ENCODE measurements at regions of chr12 and their contacts with region 1.

Region 1: GRCh38 chr12:55715833-55716581 is at the start of gene BLOC1S1:
- DNase-seq: peak; percentile 84
- H3K4me3 ChIP-seq: peak within 1 kb of the TSS; percentile 66 to 94 (median 82)
- H3K27ac ChIP-seq: peak within 1 kb of the TSS; percentile 83
- H3K4me1 ChIP-seq: peaks cover 24% of the 10 kb centered on the region
- H3K27me3 ChIP-seq: peaks cover 11 to 17% of the 10 kb centered on the region in 2 experiments
- CTCF ChIP-seq: no peak
- POLR2A ChIP-seq: no peak
- total RNA-seq, gene BLOC1S1: 84.1 and 85.6 TPM in 2 replicates

Region 2: DNA sequence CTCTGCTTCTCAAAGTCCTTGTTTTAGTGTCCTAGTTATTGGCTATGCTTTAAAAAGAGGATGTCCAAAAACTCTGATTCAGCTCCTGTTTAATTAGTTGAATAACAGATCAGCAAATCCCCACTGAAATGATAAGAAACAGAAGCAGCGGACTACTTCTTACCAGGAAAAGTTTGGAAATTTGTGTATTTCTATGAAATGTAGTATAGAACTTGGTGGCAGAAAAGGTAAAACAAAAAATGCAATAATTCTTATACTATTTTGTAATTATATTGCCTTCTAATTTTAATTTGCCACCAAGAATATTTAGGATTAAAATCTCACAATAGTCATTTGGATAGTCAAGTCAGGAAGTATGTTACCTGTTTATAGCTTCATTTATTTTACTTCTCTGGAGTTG is 143.8 kb before region 1 on chr12 and contains the start of gene OR2AP1:
- CTCF ChIA-PET with region 1: no interaction called
- POLR2A ChIA-PET with region 1: no interaction called
- dilution Hi-C with region 1: no loop called
- intact Hi-C with region 1: no loop called
- DNase-seq: no peak
- H3K4me3 ChIP-seq: no peak within 1 kb of the TSS
- H3K27ac ChIP-seq: no peak within 1 kb of the TSS
- H3K4me1 ChIP-seq: no peaks in the 10 kb centered on the region
- H3K27me3 ChIP-seq: no peaks in the 10 kb centered on the region
- CTCF ChIP-seq: no peak
- POLR2A ChIP-seq: no peak
- total RNA-seq, gene OR2AP1: not detected in 2 replicates

Region 3: DNA sequence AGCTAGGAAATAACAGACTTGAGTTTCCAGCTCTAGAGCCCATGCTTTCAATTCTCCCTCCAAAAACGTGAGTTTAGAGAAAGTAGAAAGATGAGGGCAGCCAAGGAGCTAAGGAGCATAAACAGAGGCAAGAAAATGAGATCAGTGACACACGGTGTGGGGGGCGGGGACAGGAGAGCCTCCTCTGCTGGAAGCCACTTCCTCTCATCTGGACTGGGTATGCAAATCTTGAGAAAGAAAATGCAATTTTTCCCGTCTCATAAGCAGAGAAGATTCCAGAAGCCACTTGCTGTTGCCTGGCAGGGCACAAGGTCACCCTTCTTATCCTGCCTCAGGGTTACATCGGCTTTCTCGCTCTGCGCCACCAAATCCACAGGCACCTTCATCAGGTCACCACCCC is 73.3 kb before region 1 on chr12:
- CTCF ChIA-PET with region 1: interaction called, 22 read pairs
- POLR2A ChIA-PET with region 1: no interaction called
- dilution Hi-C with region 1: no loop called
- intact Hi-C with region 1: loop called (anchors 1 kb)
- DNase-seq: no peak
- H3K4me3 ChIP-seq: no peak overlapping the region
- H3K27ac ChIP-seq: no peak overlapping the region
- H3K4me1 ChIP-seq: no peaks in the 10 kb centered on the region
- H3K27me3 ChIP-seq: peaks cover 3 to 6% of the 10 kb centered on the region in 2 experiments
- CTCF ChIP-seq: no peak
- POLR2A ChIP-seq: no peak

Region 4: DNA sequence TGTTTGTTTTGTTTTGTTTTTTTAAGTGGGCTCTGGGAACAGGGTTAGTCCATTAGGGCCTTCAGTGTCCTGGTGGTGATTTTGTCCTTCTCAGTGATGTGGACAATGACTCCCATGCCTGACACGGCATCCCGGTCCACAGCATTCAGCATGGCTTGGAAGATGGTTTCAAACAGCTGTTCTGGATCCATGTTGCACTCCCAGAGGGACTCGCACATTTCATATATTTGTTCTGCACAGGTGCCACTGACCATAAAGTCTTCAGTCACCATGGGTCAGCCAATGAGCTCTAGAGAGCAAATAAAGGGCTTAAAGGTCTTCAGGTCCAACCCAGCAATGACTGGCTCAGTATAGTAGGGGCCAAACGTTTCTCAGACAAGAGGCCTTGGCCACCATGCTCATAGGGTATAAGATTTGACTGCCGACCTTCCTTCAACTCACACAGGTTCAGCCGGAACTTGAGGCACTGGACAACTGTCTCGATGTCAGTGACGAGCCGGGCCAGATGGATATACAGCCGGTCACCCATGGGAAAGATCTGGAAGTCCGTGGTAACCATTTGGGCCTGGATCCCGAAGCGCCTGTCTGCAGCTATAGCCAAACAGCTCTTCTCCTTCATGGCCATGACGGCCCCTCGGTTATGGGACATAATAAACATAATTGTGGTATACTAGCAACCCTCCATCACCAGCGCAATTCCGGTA is 61.3 kb before region 1 on chr12:
- CTCF ChIA-PET with region 1: interaction called, 43 read pairs
- POLR2A ChIA-PET with region 1: no interaction called
- dilution Hi-C with region 1: no loop called
- intact Hi-C with region 1: loop called (anchors 1 kb)
- DNase-seq: no peak
- H3K4me3 ChIP-seq: no peak overlapping the region
- H3K27ac ChIP-seq: no peak overlapping the region
- H3K4me1 ChIP-seq: no peaks in the 10 kb centered on the region
- H3K27me3 ChIP-seq: peaks cover 2 to 7% of the 10 kb centered on the region in 2 experiments
- CTCF ChIP-seq: no peak
- POLR2A ChIP-seq: no peak

Region 5: DNA sequence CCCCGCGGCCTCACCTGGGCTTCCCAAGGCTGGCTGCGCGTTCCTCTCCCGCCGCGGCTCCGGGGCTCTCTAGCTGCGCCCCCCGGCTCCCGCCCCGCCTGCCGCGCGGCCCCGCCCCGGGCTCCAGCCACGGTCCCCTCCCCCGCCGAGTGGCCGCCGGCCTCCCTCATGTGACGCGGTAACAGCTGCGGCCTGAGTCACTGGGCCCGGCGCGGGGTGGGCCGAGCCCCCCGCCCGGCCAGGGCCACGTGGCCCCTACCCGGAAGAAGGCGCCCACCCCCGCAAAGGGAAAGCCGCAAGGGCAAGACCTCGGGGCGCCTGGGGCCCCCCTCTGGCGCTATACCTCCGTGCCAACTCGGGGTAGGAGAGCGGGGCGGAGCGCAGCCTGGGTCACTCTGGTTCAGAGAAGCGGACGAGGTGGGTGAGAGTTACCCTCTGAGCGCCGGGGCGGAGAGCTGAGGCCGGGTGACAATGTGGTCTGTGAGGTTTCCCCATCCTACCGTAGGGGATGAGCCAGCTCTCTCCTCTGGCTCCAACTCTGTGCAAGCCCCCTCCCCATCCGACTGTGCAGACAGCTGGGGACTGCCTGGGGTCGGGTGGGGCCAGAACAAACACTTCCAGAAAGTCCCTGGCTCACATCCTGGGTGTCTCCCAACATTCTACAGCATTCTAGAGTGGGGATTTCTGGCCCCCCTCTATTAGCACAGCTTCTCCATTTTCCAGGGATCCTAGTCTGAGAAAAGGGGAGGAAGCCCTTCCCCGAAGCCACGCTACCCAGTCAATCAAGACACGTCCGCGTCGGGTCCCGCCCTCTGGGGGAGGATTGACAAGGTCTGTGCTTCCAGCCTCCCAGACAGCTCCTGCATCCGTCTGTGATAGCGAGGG is 13.2 kb after region 1 on chr12 and contains the start of gene CD63:
- CTCF ChIA-PET with region 1: interaction called, 151 read pairs
- POLR2A ChIA-PET with region 1: no interaction called
- dilution Hi-C with region 1: no loop called
- intact Hi-C with region 1: no loop called
- DNase-seq: peak; percentile 88
- H3K4me3 ChIP-seq: peak within 1 kb of the TSS; percentile 71 to 89 (median 76)
- H3K27ac ChIP-seq: peak within 1 kb of the TSS; percentile 96
- H3K4me1 ChIP-seq: peaks cover 19% of the 10 kb centered on the region
- H3K27me3 ChIP-seq: no peaks in the 10 kb centered on the region
- CTCF ChIP-seq: no peak
- POLR2A ChIP-seq: peak; percentile 41
- total RNA-seq, gene CD63: 1,054 and 1,063 TPM in 2 replicates

Region 6: GRCh38 chr12:55829967-55830600 is 114.1 kb after region 1 on chr12:
- CTCF ChIA-PET with region 1: no interaction called
- POLR2A ChIA-PET with region 1: no interaction called
- dilution Hi-C with region 1: no loop called
- intact Hi-C with region 1: no loop called
- DNase-seq: peak; percentile 70
- H3K4me3 ChIP-seq: peak overlapping the region; percentile 81 to 92 (median 82)
- H3K27ac ChIP-seq: peak overlapping the region; percentile 60
- H3K4me1 ChIP-seq: peaks cover 27% of the 10 kb centered on the region
- H3K27me3 ChIP-seq: no peaks in the 10 kb centered on the region
- CTCF ChIP-seq: no peak
- POLR2A ChIP-seq: no peak

Region 7: GRCh38 chr12:56116267-56117081 is 400.5 kb after region 1 on chr12 and contains the start of gene RPL41:
- CTCF ChIA-PET with region 1: no interaction called
- POLR2A ChIA-PET with region 1: no interaction called
- dilution Hi-C with region 1: no loop called
- intact Hi-C with region 1: no loop called
- DNase-seq: peak; percentile 96
- H3K4me3 ChIP-seq: peak within 1 kb of the TSS; percentile 70 to 98 (median 72)
- H3K27ac ChIP-seq: peak within 1 kb of the TSS; percentile 86
- H3K4me1 ChIP-seq: peaks cover 24% of the 10 kb centered on the region
- H3K27me3 ChIP-seq: no peaks in the 10 kb centered on the region
- CTCF ChIP-seq: no peak
- POLR2A ChIP-seq: peak; percentile 100
- total RNA-seq, gene RPL41: 3,212 and 3,428 TPM in 2 replicates

Measured in endothelial cell of umbilical vein (primary cell).